GM12878 (cell line): ENCODE measurements at regions of chr11 and their contacts with region 1.

Region 1: GRCh38 chr11:57345555-57346211 is 7.5 kb downstream of the P2RX3 start:
- DNase-seq: no peak
- ATAC-seq: peak; percentile 83
- H3K4me3 ChIP-seq: no peak overlapping the region
- H3K27ac ChIP-seq: no peak overlapping the region
- H3K4me1 ChIP-seq: no peaks in the 10 kb centered on the region; the same call in 1 of the 2 replicates
- H3K27me3 ChIP-seq: peaks cover 0 to 4% of the 10 kb centered on the region in 2 experiments; a peak in 1 of 4 replicates
- CTCF ChIP-seq: peak; percentile 66 to 77 (median 75); a peak in 5 of 6 replicates
- EP300 ChIP-seq: no peak
- POLR2A ChIP-seq: no peak
- RAD21 ChIP-seq: peak; percentile 76

Region 2: GRCh38 chr11:56497010-56497409 is 848.7 kb before region 1 on chr11:
- CTCF ChIA-PET with region 1: no interaction called
- POLR2A ChIA-PET with region 1: no interaction called
- RAD21 ChIA-PET with region 1: no interaction called
- SMC1A ChIA-PET with region 1: no interaction called
- in situ Hi-C with region 1: no loop called
- intact Hi-C with region 1: no loop called
- DNase-seq: no peak
- ATAC-seq: no peak
- H3K4me3 ChIP-seq: no peak overlapping the region
- H3K27ac ChIP-seq: no peak overlapping the region
- H3K4me1 ChIP-seq: no peaks in the 10 kb centered on the region
- H3K27me3 ChIP-seq: no peaks in the 10 kb centered on the region
- CTCF ChIP-seq: no peak
- EP300 ChIP-seq: no peak
- POLR2A ChIP-seq: no peak
- RAD21 ChIP-seq: no peak

Region 3: GRCh38 chr11:57303990-57304579 is 41.6 kb before region 1 on chr11:
- CTCF ChIA-PET with region 1: no interaction called
- POLR2A ChIA-PET with region 1: no interaction called
- RAD21 ChIA-PET with region 1: no interaction called
- SMC1A ChIA-PET with region 1: no interaction called
- in situ Hi-C with region 1: no loop called
- intact Hi-C with region 1: no loop called
- DNase-seq: no peak
- ATAC-seq: no peak
- H3K4me3 ChIP-seq: no peak overlapping the region
- H3K27ac ChIP-seq: no peak overlapping the region
- H3K4me1 ChIP-seq: 0 out of 2 replicates have a peak, but pooled peaks cover 3% of the 10 kb centered on the region
- H3K27me3 ChIP-seq: no peaks in the 10 kb centered on the region
- CTCF ChIP-seq: no peak
- EP300 ChIP-seq: no peak
- POLR2A ChIP-seq: no peak
- RAD21 ChIP-seq: no peak

Region 4: GRCh38 chr11:58503361-58503856 is 1157.7 kb after region 1 on chr11:
- CTCF ChIA-PET with region 1: no interaction called
- POLR2A ChIA-PET with region 1: no interaction called
- RAD21 ChIA-PET with region 1: no interaction called
- SMC1A ChIA-PET with region 1: no interaction called
- in situ Hi-C with region 1: loop called (anchors 25 kb)
- intact Hi-C with region 1: loop called (anchors 10 kb)
- DNase-seq: peak; percentile 51
- ATAC-seq: peak; percentile 91
- H3K4me3 ChIP-seq: no peak overlapping the region
- H3K27ac ChIP-seq: no peak overlapping the region
- H3K4me1 ChIP-seq: peaks cover 6% of the 10 kb centered on the region; the same call in 1 of the 2 replicates
- H3K27me3 ChIP-seq: no peaks in the 10 kb centered on the region
- CTCF ChIP-seq: no peak
- EP300 ChIP-seq: peak in 1 of 2 experiments; percentile 84; a peak in 2 of 4 replicates
- POLR2A ChIP-seq: no peak
- RAD21 ChIP-seq: no peak